BJ (cell line): ENCODE measurements at regions of chr14 and their contacts with region 1.

Region 1: GRCh38 chr14:99683619-99684355 is at the start of gene CYP46A1:
- DNase-seq: peak; percentile 93
- H3K4me3 ChIP-seq: peak within 1 kb of the TSS; percentile 85
- H3K27me3 ChIP-seq: peaks cover 12% of the 10 kb centered on the region
- CTCF ChIP-seq: no peak
- polyA plus RNA-seq, gene CYP46A1: 0.06 and 0.09 TPM in 2 replicates

Region 2: GRCh38 chr14:99670361-99671229 is 13.2 kb before region 1 on chr14:
- CTCF ChIA-PET with region 1: interaction called, 22 read pairs
- POLR2A ChIA-PET with region 1: interaction called, 11 read pairs
- DNase-seq: no peak
- H3K4me3 ChIP-seq: no peak overlapping the region
- H3K27me3 ChIP-seq: no peaks in the 10 kb centered on the region; the same call in 1 of the 2 replicates
- CTCF ChIP-seq: no peak

Region 3: DNA sequence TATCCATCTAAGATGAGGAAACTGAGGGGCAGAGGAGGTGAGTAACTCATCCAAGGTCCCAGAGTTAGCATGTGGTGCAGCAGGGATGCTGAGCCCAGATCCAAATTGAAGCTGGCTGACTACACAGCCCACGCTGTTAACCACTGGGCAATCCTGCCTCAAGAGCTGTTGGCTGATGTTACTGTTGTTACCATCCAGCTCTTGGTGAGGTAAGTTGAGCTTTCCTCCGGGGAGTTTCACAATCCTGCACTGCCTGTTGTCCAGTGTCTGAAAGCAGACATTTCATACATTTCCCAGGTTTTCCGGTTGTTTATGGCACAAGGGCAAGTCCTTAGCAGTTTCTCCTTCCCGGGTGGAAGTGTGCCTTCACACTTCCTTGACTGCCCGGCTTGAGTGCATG is 14.9 kb after region 1 on chr14:
- CTCF ChIA-PET with region 1: interaction called, 22 read pairs
- POLR2A ChIA-PET with region 1: no interaction called
- DNase-seq: no peak
- H3K4me3 ChIP-seq: no peak overlapping the region
- H3K27me3 ChIP-seq: peaks cover 8% of the 10 kb centered on the region; the same call in 1 of the 2 replicates
- CTCF ChIP-seq: no peak

Region 4: DNA sequence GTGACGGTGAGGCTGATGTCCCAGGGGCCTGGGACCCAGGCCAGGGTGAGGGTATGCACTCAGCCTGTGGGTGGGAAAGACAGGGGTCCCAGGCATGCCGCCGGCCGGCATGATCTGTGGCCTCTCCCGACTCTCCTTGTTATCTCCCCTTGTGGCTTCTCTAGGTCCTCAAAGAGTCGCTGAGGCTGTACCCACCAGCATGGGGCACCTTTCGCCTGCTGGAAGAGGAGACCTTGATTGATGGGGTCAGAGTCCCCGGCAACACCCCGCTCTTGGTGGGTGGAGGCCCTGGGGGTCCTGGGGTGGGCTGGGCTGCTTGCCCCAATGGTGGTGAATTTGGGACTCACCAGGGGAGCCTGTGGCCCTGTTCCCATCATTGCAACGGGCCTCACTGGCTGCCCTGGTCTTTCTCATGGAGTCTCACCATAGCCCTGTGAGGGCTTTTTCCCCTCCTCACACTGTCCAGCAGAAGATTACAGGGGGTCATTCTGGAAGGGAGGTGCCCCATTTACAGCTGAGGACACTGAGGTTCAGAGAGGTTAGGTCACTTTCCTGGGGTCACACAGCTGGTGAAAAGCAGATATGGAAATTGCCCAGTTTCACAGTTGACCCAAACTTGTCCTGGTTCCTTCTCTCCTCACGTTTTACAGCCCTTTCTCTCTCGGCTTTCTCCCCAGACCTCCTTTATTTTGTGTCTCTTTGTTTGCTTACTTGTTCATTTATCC is 38.2 kb after region 1 on chr14:
- CTCF ChIA-PET with region 1: interaction called, 14 read pairs
- POLR2A ChIA-PET with region 1: no interaction called
- DNase-seq: no peak
- H3K4me3 ChIP-seq: no peak overlapping the region
- H3K27me3 ChIP-seq: peaks cover 11% of the 10 kb centered on the region
- CTCF ChIP-seq: no peak

Region 5: GRCh38 chr14:99809360-99809759 is 125.6 kb after region 1 on chr14:
- CTCF ChIA-PET with region 1: no interaction called
- POLR2A ChIA-PET with region 1: no interaction called
- DNase-seq: peak; percentile 50
- H3K4me3 ChIP-seq: no peak overlapping the region
- H3K27me3 ChIP-seq: peaks cover 13% of the 10 kb centered on the region
- CTCF ChIP-seq: no peak

Region 6: DNA sequence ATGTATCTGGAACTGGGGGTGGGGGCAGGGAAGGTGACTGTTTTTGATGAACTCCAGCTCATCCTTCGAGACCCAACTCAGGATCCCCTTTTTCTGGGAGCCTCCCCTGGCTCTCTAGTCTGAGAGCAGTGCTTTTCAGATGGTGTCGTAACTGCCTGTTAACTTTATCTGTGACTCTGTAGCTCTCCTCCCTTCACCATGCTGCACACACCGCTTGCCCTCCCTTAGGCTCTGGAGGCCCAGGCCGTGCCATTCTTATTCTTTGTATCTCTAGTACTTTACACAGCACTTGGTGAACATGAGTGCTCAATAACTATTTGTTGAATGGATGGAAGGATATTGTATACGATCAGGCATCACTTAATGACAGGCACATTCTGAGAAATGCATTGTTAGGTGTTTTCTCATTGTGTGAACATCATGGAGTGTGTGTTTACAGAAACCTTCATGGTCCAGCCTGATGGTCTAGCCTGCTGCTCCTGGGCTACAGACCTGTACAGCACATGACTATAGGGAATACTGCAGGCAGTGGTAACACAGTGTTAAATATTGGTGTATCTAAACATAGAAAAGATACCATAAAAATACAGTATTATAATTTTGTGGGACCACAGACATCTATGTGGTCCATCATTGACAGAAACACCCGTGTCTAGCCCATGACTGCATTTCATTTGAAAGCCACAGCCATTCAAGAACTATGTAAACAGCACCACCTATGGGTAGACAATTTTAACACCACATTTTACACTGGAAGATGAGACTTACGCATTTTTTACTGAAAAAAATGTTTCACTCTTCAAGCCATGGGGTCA is 201.3 kb after region 1 on chr14:
- CTCF ChIA-PET with region 1: interaction called, 29 read pairs
- POLR2A ChIA-PET with region 1: no interaction called
- DNase-seq: no peak
- H3K4me3 ChIP-seq: no peak overlapping the region
- H3K27me3 ChIP-seq: no peaks in the 10 kb centered on the region
- CTCF ChIP-seq: peak; percentile 68